Panc1 (cell line): ENCODE measurements at regions of chr19 and their contacts with region 1.

Region 1: GRCh38 chr19:54029930-54030490 is 33.7 kb downstream of the VSTM1 start:
- DNase-seq: no peak
- ATAC-seq: peak; percentile 86
- H3K4me3 ChIP-seq: no peak overlapping the region
- H3K27ac ChIP-seq: peak overlapping the region; percentile 95
- H3K4me1 ChIP-seq: peaks cover 22% of the 10 kb centered on the region
- H3K27me3 ChIP-seq: no peaks in the 10 kb centered on the region
- CTCF ChIP-seq: peak; percentile 88

Region 2: DNA sequence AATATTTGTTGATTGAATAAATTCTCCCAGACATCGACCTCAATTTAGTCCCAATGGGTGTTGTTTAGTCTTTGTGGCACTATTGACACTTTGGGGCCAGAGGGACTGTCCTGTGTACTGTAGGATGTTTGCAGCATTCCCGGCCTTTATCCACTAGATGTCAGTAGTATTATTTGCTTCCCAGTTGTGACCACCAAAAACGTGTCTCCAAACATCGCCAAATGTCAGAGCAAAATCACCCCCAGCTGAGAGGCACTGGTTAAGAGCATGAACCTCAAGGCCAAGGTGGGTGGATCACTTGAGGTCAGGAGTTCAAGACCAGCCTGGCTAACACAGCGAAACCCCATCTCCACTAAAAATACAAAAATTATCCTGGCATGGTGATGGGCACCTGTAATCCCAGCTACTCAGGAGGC is 221.3 kb before region 1 on chr19:
- CTCF ChIA-PET with region 1: interaction called, 30 read pairs
- POLR2A ChIA-PET with region 1: no interaction called
- in situ Hi-C with region 1: no loop called
- intact Hi-C with region 1: loop called (anchors 2 kb)
- DNase-seq: peak; percentile 33
- ATAC-seq: peak; percentile 91
- H3K4me3 ChIP-seq: no peak overlapping the region
- H3K27ac ChIP-seq: no peak overlapping the region
- H3K4me1 ChIP-seq: no peaks in the 10 kb centered on the region
- H3K27me3 ChIP-seq: no peaks in the 10 kb centered on the region
- CTCF ChIP-seq: peak; percentile 63; the same call in 1 of the 2 replicates

Region 3: DNA sequence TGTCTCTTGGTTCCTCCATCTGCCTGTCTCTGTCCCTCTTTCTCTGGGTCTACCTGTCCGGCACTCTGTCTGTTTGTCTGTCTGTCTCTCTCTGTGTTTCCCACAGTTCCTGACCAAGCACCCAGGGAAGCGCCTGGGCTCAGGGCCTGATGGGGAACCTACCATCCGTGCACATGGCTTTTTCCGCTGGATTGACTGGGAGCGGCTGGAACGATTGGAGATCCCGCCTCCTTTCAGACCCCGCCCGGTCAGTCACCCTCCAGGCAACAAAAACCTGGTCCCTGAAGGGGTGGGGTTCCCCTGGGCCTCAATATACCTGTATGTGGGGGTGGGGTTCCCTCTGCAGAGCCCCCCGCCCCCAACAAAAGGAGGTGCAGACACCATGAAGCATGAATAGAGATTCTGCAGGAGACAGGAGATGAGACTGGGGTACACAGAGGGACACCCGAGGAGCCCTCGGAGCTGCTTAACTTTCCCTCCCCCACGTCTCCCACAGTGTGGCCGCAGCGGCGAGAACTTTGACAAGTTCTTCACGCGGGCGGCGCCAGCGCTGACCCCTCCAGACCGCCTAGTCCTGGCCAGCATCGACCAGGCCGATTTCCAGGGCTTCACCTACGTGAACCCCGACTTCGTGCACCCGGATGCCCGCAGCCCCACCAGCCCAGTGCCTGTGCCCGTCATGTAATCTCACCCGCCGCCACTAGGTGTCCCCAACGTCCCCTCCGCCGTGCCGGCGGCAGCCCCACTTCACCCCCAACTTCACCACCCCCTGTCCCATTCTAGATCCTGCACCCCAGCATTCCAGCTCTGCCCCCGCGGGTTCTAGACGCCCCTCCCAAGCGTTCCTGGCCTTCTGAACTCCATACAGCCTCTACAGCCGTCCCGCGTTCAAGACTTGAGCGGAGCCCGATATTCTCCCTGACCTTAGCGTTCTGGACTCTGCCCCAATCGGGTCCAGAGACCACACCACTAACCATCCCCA is 123.5 kb before region 1 on chr19:
- CTCF ChIA-PET with region 1: interaction called, 12 read pairs
- POLR2A ChIA-PET with region 1: no interaction called
- in situ Hi-C with region 1: loop called (anchors 25 kb)
- intact Hi-C with region 1: no loop called
- DNase-seq: no peak
- ATAC-seq: peak; percentile 47
- H3K4me3 ChIP-seq: peak overlapping the region; percentile 33 to 53
- H3K27ac ChIP-seq: peak overlapping the region; percentile 36; the same call in 1 of the 2 replicates
- H3K4me1 ChIP-seq: peaks cover 23% of the 10 kb centered on the region
- H3K27me3 ChIP-seq: no peaks in the 10 kb centered on the region
- CTCF ChIP-seq: peak; percentile 99

Region 4: GRCh38 chr19:54017261-54017660 is 12.7 kb before region 1 on chr19:
- CTCF ChIA-PET with region 1: interaction called, 14 read pairs
- POLR2A ChIA-PET with region 1: no interaction called
- in situ Hi-C with region 1: no loop called
- intact Hi-C with region 1: no loop called
- DNase-seq: no peak
- ATAC-seq: peak; percentile 36; the same call in 1 of the 2 replicates
- H3K4me3 ChIP-seq: no peak overlapping the region
- H3K27ac ChIP-seq: peak overlapping the region; percentile 96
- H3K4me1 ChIP-seq: peaks cover 18% of the 10 kb centered on the region
- H3K27me3 ChIP-seq: no peaks in the 10 kb centered on the region
- CTCF ChIP-seq: no peak

Region 5: GRCh38 chr19:54096617-54097129 is 66.7 kb after region 1 on chr19:
- CTCF ChIA-PET with region 1: interaction called, 3 read pairs
- POLR2A ChIA-PET with region 1: interaction called, 9 read pairs
- in situ Hi-C with region 1: no loop called
- intact Hi-C with region 1: loop called (anchors 5 kb)
- DNase-seq: no peak
- ATAC-seq: peak; percentile 83
- H3K4me3 ChIP-seq: peak overlapping the region; percentile 45 to 74
- H3K27ac ChIP-seq: peak overlapping the region; percentile 89
- H3K4me1 ChIP-seq: peaks cover 16% of the 10 kb centered on the region
- H3K27me3 ChIP-seq: no peaks in the 10 kb centered on the region
- CTCF ChIP-seq: no peak

Region 6: DNA sequence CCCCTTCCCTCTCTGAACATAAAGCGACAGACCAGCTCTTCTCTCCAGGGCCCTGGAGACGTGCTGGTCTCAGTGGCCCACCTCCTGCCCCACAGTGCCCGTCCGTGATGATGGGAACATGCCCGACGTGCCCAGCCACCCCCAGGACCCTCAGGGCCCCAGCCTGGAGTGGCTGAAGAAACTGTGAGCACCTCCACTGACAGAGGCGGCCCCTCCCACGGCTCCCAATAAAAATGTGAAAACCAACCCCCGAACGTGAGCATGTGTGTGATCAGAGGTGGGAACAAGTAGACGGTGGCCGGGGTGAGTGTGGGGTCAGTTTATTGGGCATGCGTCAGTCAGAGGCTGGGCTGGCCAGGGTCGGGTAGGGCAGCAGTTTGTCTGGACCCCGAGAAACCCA is 76.7 kb after region 1 on chr19:
- CTCF ChIA-PET with region 1: no interaction called
- POLR2A ChIA-PET with region 1: no interaction called
- in situ Hi-C with region 1: no loop called
- intact Hi-C with region 1: no loop called
- DNase-seq: no peak
- ATAC-seq: no peak
- H3K4me3 ChIP-seq: no peak overlapping the region
- H3K27ac ChIP-seq: no peak overlapping the region
- H3K4me1 ChIP-seq: 0 out of 2 replicates have a peak, but pooled peaks cover 13% of the 10 kb centered on the region
- H3K27me3 ChIP-seq: no peaks in the 10 kb centered on the region
- CTCF ChIP-seq: no peak